ENCODE measurements at regions of chr4 and their contacts with region 1.

Region 1: GRCh38 chr4:81565142-81565870 is 93.6 kb upstream of the RASGEF1B start:
- DNase-seq: peak; percentile 37
- H3K4me3 ChIP-seq: peak overlapping the region; percentile 48
- H3K27ac ChIP-seq: peak overlapping the region; percentile 43
- H3K4me1 ChIP-seq: peaks cover 69% of the 10 kb centered on the region
- CTCF ChIP-seq: no peak

Region 2: GRCh38 chr4:81600520-81601357 is 35.4 kb after region 1 on chr4:
- CTCF ChIA-PET with region 1: no interaction called
- POLR2A ChIA-PET with region 1: interaction called, 11 read pairs
- intact Hi-C with region 1: no loop called
- DNase-seq: no peak
- H3K4me3 ChIP-seq: no peak overlapping the region
- H3K27ac ChIP-seq: no peak overlapping the region
- H3K4me1 ChIP-seq: peaks cover 9% of the 10 kb centered on the region
- CTCF ChIP-seq: no peak

Region 3: GRCh38 chr4:81621490-81621889 is 56.2 kb after region 1 on chr4:
- CTCF ChIA-PET with region 1: no interaction called
- POLR2A ChIA-PET with region 1: interaction called, 17 read pairs
- intact Hi-C with region 1: no loop called
- DNase-seq: peak; percentile 73
- H3K4me3 ChIP-seq: peak overlapping the region; percentile 1
- H3K27ac ChIP-seq: peak overlapping the region; percentile 49
- H3K4me1 ChIP-seq: peaks cover 58% of the 10 kb centered on the region
- CTCF ChIP-seq: no peak

Region 4: DNA sequence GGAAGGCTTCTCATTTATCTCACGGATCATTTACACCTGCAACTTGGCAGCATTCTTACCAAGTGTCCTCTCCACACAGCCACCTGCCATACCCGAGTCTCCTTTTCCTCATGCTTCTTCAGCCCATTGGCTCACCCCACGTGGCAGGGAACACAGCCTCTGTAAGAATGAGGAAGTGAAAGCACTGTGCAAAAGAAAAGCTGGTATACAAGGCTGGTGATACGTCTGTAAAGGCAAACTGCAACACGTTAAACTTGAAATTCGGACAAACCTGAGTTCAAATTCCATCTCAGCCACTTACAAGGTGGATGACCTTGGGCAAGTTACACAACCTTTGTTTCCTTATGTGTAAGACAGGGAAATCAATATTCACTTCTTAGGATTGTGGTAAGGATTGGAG is 70.4 kb after region 1 on chr4:
- CTCF ChIA-PET with region 1: interaction called, 3 read pairs
- POLR2A ChIA-PET with region 1: interaction called, 3 read pairs
- intact Hi-C with region 1: loop called (anchors 2 kb)
- DNase-seq: peak; percentile 96
- H3K4me3 ChIP-seq: peak overlapping the region; percentile 40
- H3K27ac ChIP-seq: peak overlapping the region; percentile 85
- H3K4me1 ChIP-seq: peaks cover 53% of the 10 kb centered on the region
- CTCF ChIP-seq: no peak

Region 5: GRCh38 chr4:81648576-81649275 is 83.4 kb after region 1 on chr4:
- CTCF ChIA-PET with region 1: no interaction called
- POLR2A ChIA-PET with region 1: interaction called, 4 read pairs
- intact Hi-C with region 1: loop called (anchors 5 kb)
- DNase-seq: peak; percentile 88
- H3K4me3 ChIP-seq: peak overlapping the region; percentile 52
- H3K27ac ChIP-seq: peak overlapping the region; percentile 90
- H3K4me1 ChIP-seq: peaks cover 65% of the 10 kb centered on the region
- CTCF ChIP-seq: no peak

Region 6: DNA sequence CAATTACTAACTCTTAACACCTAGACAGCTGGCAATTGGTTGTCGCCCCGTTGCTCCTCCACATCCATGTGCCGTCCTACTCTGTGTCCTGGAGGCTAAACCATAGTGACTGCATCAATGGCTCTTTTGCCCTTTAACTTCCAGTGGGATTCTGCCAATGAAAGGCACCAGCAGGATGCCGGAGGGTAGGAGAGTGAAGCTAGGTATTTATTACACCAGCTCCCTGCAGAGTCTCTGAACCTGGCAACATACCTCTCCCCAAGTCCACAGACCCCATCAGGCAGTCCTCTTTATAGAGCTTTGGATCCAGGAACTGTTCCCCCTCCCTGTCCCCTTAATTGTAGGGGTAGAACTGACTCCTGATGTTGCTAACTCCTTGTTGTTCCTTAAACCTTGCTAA is 381.7 kb after region 1 on chr4:
- CTCF ChIA-PET with region 1: no interaction called
- POLR2A ChIA-PET with region 1: no interaction called
- intact Hi-C with region 1: no loop called
- DNase-seq: no peak
- H3K4me3 ChIP-seq: no peak overlapping the region
- H3K27ac ChIP-seq: no peak overlapping the region
- H3K4me1 ChIP-seq: no peaks in the 10 kb centered on the region
- CTCF ChIP-seq: no peak

Region 7: DNA sequence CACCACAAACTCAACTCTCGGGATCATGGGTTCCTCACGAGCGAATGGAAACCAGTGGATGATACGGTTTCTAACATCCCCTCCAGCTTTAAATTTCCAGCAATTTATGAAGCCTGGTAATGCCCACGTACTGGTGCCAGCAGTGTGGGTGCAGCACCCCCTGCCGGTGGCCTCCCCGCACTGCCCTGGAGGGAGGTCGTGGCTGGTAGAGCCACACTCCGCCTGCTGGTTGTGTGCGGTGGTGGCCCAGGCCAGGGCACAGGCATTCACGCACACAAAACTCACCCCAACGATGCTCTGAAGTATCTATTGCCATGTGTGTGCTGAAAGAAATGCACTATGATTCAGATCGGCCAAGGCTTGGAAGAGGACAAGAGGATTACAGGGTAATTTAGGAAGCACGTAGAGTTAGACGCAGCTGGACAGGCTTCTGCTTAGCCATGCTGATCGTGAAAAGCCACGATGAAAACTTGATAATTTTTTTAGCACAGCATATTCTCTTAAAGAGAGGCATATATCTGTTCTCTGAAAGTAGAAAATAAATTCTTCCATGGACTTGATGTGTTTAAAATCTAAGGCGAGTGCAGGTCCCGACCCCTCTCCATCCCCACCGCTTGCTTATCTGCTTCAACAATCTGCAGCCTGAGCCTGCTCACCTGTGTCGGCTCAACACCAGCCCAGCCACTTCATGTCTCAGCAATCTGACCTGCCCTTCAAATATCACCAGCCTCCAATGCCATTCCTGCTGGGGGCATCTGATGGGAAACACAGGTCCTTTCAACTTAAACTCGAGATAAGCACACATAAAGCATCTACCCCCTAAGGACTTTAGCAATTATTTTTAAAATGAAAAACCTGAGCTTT is 1174.2 kb after region 1 on chr4:
- CTCF ChIA-PET with region 1: no interaction called
- POLR2A ChIA-PET with region 1: no interaction called
- intact Hi-C with region 1: no loop called
- DNase-seq: peak; percentile 71
- H3K4me3 ChIP-seq: no peak overlapping the region
- H3K27ac ChIP-seq: no peak overlapping the region
- H3K4me1 ChIP-seq: no peaks in the 10 kb centered on the region
- CTCF ChIP-seq: peak; percentile 99

Measured in OCI-LY7 (cell line).